ENCODE measurements at regions of chr11 and their contacts with region 1.

Region 1: GRCh38 chr11:96145163-96145595 is 197.8 kb downstream of the MAML2 start:
- DNase-seq: no peak
- ATAC-seq: no peak
- H3K4me3 ChIP-seq: no peak overlapping the region
- H3K4me3 Mint-ChIP-seq: no peak overlapping the region
- H3K27ac ChIP-seq: no peak overlapping the region
- H3K27ac Mint-ChIP-seq: no peak overlapping the region
- H3K4me1 ChIP-seq: peaks cover 17% of the 10 kb centered on the region
- H3K4me1 Mint-ChIP-seq: peaks cover 58% of the 10 kb centered on the region
- H3K27me3 ChIP-seq: no peaks in the 10 kb centered on the region
- H3K27me3 Mint-ChIP-seq: no peaks in the 10 kb centered on the region
- CTCF ChIP-seq: no peak

Region 2: DNA sequence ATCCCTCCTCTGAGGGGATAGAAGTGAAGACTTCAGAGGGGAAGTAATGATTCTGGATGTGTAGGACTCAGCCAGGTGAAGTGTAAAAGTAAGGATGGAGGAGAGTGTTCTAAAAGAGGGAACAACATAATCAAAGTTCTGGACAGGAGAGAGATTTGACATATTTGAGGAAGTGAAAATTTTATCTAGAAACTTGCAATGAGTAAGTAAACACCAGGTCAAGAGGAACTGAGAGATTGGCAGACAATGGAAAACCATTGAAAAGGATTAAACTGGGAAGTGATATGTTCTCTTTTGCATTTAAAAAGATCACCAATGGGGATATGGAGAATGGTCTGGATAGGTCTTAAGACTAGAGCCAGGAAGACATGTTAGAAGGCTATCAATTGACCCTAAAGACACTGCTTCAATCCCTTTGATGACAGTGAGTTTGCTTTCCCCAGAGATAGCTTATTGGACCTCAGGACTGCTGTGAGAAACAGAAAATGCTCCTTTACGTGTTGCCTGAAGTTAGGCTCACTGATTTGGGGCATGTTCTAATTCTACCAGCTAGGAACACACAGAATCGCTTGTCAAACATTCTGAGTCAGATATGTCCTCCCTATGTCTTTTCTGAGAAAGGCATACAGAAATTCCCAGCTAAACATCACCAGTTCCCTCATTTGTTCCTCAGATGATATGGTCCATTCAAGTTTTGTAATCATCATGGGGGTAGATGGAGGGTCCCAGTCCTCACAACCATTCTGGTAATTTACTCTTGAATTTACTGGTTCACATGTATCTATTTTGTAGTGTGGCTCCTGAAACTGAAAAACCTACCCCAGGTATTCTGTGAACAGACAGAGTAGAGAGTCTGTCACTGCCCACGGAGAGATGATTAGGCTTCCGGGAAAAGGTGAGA is 52.9 kb after region 1 on chr11:
- CTCF ChIA-PET with region 1: no interaction called
- POLR2A ChIA-PET with region 1: no interaction called
- intact Hi-C with region 1: loop called in 1 of 2 experiments (anchors 2 kb)
- DNase-seq: no peak
- ATAC-seq: no peak
- H3K4me3 ChIP-seq: no peak overlapping the region
- H3K4me3 Mint-ChIP-seq: no peak overlapping the region
- H3K27ac ChIP-seq: no peak overlapping the region
- H3K27ac Mint-ChIP-seq: peak overlapping the region; percentile 81
- H3K4me1 ChIP-seq: peaks cover 62% of the 10 kb centered on the region
- H3K4me1 Mint-ChIP-seq: peaks cover 85% of the 10 kb centered on the region
- H3K27me3 ChIP-seq: no peaks in the 10 kb centered on the region
- H3K27me3 Mint-ChIP-seq: no peaks in the 10 kb centered on the region
- CTCF ChIP-seq: no peak

Region 3: GRCh38 chr11:96242971-96243647 is 97.9 kb after region 1 on chr11:
- CTCF ChIA-PET with region 1: no interaction called
- POLR2A ChIA-PET with region 1: no interaction called
- intact Hi-C with region 1: no loop called
- DNase-seq: peak; percentile 40 to 87 (median 71)
- ATAC-seq: peak; percentile 87
- H3K4me3 ChIP-seq: peak overlapping the region; percentile 55 to 61
- H3K4me3 Mint-ChIP-seq: peak overlapping the region; percentile 87
- H3K27ac ChIP-seq: peak overlapping the region; percentile 46 to 68
- H3K27ac Mint-ChIP-seq: peak overlapping the region; percentile 86
- H3K4me1 ChIP-seq: peaks cover 54% of the 10 kb centered on the region
- H3K4me1 Mint-ChIP-seq: peaks cover 62% of the 10 kb centered on the region
- H3K27me3 ChIP-seq: no peaks in the 10 kb centered on the region
- H3K27me3 Mint-ChIP-seq: no peaks in the 10 kb centered on the region
- CTCF ChIP-seq: no peak

Measured in CD8-positive, alpha-beta T cell (primary cell).